ENCODE measurements at regions of chr1 and their contacts with region 1.

Region 1: DNA sequence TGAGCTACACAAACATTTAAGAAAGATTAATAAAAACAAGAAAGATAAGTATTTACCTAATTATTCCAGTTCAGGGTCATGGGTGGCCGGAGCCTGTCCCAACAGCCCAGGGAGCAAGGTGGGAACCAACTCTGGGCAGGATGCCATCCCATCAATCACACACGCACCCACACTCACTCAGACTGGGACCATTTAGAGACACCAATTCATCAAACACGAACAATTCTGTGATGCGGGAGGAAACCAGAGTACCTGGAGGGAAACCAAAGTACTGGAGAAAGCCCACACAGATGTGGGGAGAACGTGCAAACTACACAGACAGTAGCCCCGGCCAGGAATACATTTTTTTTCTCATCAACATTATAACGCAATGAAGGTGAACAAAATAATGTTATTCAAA is 16.2 kb downstream of the WASF2 start:
- DNase-seq: peak in 3 of 7 donors; percentile 22 to 52 (median 25)
- H3K4me3 ChIP-seq: no peak overlapping the region
- H3K27ac ChIP-seq: peak overlapping the region in 1 of 5 donors; percentile 37
- H3K4me1 ChIP-seq: peaks cover 14 to 76% of the 10 kb centered on the region in 2 donors
- H3K27me3 ChIP-seq: no peaks in the 10 kb centered on the region
- CTCF ChIP-seq: no peak
- POLR2A ChIP-seq: no peak

Region 2: GRCh38 chr1:27071049-27071416 is 402.7 kb before region 1 on chr1:
- intact Hi-C with region 1: no loop called
- DNase-seq: peak; percentile 37 to 79 (median 46)
- H3K4me3 ChIP-seq: no peak overlapping the region
- H3K27ac ChIP-seq: no peak overlapping the region
- H3K4me1 ChIP-seq: no peaks in the 10 kb centered on the region
- H3K27me3 ChIP-seq: no peaks in the 10 kb centered on the region
- CTCF ChIP-seq: no peak
- POLR2A ChIP-seq: no peak

Region 3: DNA sequence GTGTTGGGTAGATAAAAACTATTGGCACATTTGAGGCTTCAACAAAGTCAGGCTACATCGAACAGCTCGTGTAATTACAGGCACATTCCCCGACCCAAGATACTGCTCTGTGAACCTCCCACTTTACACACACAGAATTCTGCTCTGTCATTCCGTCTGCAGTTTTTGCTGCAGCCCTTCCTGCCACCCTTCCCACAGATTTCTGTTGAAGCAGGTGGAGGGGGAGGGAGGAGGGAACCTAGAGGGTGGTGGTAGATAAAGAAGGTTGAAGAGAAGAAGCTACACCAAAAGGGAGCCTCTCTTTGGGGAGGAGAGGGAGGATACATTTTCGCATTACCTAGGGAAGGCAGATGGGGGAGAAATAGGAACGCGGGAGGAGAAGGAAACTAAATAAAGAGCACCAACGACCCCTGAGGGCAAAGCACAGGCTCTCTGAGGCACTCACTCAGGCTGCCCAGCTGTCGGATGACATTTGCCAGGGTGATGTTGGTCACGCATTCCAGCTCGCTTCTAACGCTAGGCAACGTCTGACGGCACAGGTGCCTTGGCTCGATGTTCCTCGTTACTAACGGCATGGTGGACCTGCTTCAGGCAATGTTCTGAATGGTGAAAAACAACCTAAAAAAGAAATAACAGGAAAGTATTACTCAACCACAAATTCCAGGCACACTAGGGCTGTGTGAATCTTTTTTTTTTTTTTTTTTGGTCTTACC is 45.3 kb before region 1 on chr1:
- intact Hi-C with region 1: loop called in 1 of 2 experiments (anchors 10 kb)
- DNase-seq: peak in 1 of 7 donors; percentile 86
- H3K4me3 ChIP-seq: peak overlapping the region in 1 of 4 donors; percentile 7
- H3K27ac ChIP-seq: peak overlapping the region in 4 of 5 donors; percentile 31 to 79 (median 54)
- H3K4me1 ChIP-seq: peaks cover 35 to 84% of the 10 kb centered on the region in 2 donors
- H3K27me3 ChIP-seq: no peaks in the 10 kb centered on the region
- CTCF ChIP-seq: no peak
- POLR2A ChIP-seq: no peak